Activated naive CD4-positive, alpha-beta T cell treated with anti-CD3 and anti-CD28 coated beads, Interleukin-2, amount 10 ng/mL, durations not matched to agents 7 days and 5 days (primary cell): ENCODE measurements at regions of chr7 and their contacts with region 1.

Region 1: DNA sequence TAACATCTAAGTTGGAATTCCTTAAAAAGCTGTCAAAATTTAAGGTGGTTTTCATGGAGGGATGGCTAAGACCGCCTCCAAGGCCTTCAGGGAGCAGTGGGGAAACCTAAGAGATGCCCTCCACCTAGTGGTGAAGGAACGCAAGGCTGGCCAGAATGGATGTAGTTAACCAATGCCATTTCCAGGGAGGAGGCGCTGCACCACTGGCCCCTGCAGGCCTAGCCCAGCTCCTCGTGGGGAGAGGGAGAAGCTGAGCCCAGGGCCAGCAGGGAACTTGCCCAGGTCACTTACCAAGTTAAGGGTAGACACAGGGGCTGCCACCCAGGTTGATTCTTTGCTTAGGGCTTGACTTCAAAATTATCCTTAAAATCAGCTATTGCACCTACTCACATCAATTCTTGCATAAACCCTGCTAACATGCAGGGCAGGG is 32.0 kb downstream of the FIGNL1 start:
- DNase-seq: peak; percentile 83
- H3K4me3 Mint-ChIP-seq: no peak overlapping the region
- H3K27ac Mint-ChIP-seq: no peak overlapping the region
- H3K4me1 Mint-ChIP-seq: peaks cover 34% of the 10 kb centered on the region
- H3K27me3 Mint-ChIP-seq: peaks cover 16% of the 10 kb centered on the region

Region 2: DNA sequence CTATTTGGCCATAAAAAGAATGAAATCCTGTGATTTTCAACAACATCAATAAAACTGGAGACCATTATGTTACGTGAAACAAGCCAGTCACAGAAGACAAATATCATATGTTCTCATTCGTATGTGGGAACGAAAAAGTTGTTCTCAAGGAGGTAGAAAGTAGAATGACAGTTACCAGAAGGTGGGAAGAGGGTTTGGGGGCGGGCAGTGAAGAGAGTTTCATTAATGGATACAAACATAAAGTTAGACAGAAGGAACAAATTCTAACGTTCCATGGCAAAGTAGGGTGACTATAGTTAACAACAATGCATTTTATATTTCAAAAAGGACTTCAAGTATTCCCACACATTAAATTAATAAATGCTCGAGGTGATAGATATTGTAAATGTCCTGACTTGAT is 422.4 kb before region 1 on chr7:
- CTCF ChIA-PET with region 1: no interaction called
- DNase-seq: no peak
- H3K4me3 Mint-ChIP-seq: no peak overlapping the region
- H3K27ac Mint-ChIP-seq: no peak overlapping the region
- H3K4me1 Mint-ChIP-seq: no peaks in the 10 kb centered on the region
- H3K27me3 Mint-ChIP-seq: no peaks in the 10 kb centered on the region

Region 3: DNA sequence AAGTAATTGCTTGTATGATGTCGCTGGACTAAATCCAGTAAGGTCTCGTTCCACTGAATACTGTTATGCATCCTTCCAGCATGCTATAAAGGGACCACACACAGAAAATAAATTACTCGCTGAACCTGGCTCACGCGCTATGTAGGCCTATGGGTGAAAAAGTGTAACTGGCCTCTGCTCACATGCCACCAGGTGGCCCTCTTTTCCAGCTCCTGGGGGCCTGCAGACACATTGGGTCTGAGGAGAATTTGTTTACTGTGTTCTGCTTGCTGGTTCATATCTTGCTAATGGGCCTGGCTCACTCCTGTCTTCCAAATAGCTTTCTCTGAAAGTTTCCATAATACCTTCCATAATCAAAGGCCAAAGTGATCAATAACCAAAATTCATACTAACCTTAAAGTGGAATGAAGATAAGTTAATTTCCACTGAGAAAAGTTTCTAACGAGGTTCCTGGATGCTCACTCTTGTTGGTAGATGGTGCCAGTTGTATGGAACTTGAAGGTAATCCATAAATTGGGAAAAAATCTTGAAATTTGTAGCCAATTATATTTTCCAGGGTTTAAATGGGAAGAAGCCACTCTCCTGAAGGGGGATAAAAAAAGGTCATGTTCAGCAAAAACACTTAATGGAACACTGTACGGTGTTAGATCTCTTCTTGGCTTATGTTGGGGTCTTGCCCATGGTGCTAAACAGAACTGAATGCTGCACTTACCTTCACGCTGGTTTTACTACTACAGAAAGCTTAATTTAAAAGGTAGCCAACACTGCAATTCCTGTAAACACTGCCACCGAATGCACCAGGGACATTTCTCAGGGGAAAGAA is 298.1 kb before region 1 on chr7:
- CTCF ChIA-PET with region 1: interaction called, 39 read pairs
- DNase-seq: peak; percentile 60
- H3K4me3 Mint-ChIP-seq: no peak overlapping the region
- H3K27ac Mint-ChIP-seq: no peak overlapping the region
- H3K4me1 Mint-ChIP-seq: no peaks in the 10 kb centered on the region
- H3K27me3 Mint-ChIP-seq: peaks cover 10% of the 10 kb centered on the region

Region 4: DNA sequence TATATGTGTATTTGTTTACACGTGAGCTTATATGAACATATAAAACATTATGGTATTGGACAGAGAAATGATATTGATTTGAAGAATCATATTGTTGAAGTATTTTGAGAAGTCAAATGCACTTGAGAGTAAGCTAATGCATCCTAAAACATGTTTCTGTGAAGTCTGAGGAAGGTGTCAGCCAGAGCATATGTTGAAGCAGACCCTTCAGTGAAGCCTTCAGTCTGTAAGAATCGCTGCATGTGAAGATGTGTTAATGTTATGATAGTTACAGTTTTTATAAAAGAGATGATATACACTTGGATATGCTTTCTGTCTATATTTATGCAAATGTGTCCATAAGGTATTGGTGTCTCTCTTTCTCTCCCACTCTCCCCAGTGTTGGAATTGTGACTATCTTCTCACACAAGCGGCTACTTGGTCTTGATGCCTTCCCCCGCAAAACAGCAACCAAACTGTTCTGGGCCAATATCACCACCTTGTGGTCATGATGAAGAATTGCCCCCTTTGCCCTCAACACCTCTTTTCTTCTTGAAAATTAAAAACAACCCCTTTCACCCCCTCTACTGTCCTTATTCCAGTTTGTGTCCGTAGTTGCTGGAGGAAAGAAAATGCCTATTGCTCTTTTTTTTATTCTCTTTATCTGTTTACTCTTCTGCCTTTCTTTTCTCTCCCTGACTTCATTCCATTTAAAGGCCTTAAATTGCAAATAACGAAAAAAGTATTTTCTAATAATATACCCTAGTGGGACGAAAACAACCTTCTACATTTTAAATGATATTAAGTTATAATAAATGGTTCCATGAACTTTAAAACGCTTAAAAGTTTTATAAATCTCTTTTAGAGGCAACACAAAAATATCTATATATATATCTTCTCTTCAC is 48.7 kb before region 1 on chr7:
- CTCF ChIA-PET with region 1: interaction called, 12 read pairs
- DNase-seq: peak; percentile 61
- H3K4me3 Mint-ChIP-seq: no peak overlapping the region
- H3K27ac Mint-ChIP-seq: peak overlapping the region; percentile 76
- H3K4me1 Mint-ChIP-seq: peaks cover 97% of the 10 kb centered on the region
- H3K27me3 Mint-ChIP-seq: no peaks in the 10 kb centered on the region

Region 5: GRCh38 chr7:50404392-50404791 is 13.7 kb before region 1 on chr7:
- CTCF ChIA-PET with region 1: interaction called, 30 read pairs
- DNase-seq: no peak
- H3K4me3 Mint-ChIP-seq: no peak overlapping the region
- H3K27ac Mint-ChIP-seq: peak overlapping the region; percentile 11
- H3K4me1 Mint-ChIP-seq: peaks cover 61% of the 10 kb centered on the region
- H3K27me3 Mint-ChIP-seq: no peaks in the 10 kb centered on the region